HEK293 (cell line): ENCODE measurements at regions of chr15 and their contacts with region 1.

Region 1: DNA sequence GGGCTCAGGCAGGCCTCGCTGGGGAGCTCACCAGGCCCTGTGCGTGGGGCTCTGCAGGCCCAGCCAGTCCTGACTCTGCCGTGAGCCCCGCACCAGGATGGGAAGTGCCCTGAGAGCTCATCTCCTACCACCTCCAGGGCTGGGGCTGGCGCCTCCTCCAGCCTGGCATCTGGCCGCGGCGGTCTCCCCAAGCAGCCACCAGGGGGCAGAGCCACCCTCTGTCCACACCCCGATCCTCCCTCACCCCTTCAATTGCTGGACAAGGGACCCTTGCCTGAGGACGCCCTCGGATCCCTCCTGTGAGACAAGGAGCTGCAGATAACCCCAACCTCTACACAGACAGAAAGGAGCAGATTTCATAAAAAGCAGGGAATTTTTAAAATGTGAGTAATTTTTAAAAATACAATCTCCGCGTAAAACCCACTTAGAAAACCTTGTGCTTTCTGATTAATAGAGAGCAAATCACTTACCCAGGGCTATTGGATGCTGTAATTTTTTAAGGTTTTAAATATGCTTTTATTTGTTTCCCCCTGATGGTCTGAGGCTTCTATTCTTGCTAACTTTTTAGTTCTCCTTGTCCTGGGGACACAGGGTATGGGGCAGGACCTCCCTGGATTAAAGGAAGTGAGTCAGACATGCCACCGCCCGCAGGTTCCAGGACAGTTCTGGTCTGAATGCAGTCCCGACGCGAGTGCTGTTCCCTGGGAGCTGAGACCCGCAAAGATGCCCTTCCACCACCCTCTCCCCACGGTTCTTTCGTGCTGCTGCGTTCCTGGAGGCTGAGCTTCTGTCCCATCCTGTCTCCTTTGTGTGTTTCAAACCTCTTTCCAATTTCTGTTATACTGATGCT is 52.3 kb upstream of the CHRNA7 start:
- H3K4me3 ChIP-seq: no peak overlapping the region
- H3K27ac ChIP-seq: no peak overlapping the region
- H3K4me1 ChIP-seq: no peaks in the 10 kb centered on the region
- CTCF ChIP-seq: peak; percentile 76

Region 2: DNA sequence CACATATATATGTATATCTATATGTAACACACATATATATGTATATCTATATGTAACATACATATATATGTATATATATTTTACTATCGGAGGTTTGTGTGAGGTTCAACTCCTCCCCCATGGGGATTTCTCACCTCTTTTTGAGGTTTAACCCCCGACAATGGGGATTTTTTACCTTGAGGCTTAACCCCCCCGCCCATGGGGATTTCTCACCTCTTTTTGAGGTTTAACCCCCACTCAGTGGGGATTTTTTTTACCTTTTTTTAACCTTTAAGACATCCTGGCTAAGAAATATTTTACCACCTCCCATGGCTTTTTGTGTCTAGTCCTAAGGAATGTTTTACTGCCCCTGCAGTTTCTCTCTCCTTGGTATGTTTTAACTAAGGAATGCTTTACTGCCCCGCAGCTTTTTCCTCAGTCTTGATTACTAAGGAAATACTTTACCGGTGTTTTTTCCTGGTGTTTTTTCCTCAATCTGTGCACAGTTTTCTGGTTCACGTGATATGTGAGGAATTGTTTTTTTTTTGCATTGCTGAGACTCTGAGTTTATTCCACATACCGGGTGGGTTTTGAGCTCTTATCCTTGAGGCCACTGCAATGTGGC is 466.2 kb before region 1 on chr15:
- CTCF ChIA-PET with region 1: no interaction called
- POLR2A ChIA-PET with region 1: no interaction called
- H3K4me3 ChIP-seq: no peak overlapping the region
- H3K27ac ChIP-seq: no peak overlapping the region
- H3K4me1 ChIP-seq: no peaks in the 10 kb centered on the region
- CTCF ChIP-seq: no peak

Region 3: DNA sequence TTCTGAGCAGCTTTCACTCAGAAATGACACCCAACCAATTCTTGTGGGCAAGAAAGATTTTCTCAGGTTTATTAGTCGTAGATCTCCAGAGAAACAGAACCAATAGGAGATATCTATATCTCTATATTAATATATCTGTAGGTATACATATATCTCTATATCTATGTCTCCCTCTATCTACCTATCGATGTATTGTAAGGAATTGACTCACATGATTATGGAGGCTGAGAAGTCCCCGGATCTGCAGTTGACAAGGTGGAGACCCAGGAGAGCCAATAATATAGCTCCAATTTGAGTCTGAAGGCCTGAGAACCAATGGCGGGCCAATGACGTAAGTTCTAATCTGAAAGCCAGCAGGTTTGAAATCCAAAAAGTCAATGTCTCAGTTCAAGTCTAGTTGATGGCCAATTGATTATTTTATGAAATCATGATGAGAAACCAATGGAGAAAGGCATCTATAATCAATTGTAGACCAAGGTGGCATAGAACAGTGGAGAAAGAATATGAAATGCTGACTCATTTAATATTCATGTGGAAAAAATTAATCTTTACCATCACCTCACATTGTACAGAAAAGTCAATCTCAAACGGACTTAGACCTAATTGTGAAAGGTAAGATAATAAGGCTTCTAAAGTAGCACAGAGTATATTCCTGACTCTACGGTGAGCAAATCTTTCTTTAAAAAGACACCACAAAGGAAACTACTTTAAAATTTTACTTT is 13.3 kb before region 1 on chr15:
- CTCF ChIA-PET with region 1: interaction called, 12 read pairs
- POLR2A ChIA-PET with region 1: no interaction called
- H3K4me3 ChIP-seq: no peak overlapping the region
- H3K27ac ChIP-seq: no peak overlapping the region
- H3K4me1 ChIP-seq: no peaks in the 10 kb centered on the region
- CTCF ChIP-seq: no peak

Region 4: GRCh38 chr15:32003558-32003957 is 25.5 kb after region 1 on chr15:
- CTCF ChIA-PET with region 1: interaction called, 12 read pairs
- POLR2A ChIA-PET with region 1: no interaction called
- H3K4me3 ChIP-seq: no peak overlapping the region
- H3K27ac ChIP-seq: no peak overlapping the region
- H3K4me1 ChIP-seq: no peaks in the 10 kb centered on the region
- CTCF ChIP-seq: no peak

Region 5: GRCh38 chr15:32014953-32015352 is 36.9 kb after region 1 on chr15:
- CTCF ChIA-PET with region 1: interaction called, 10 read pairs
- POLR2A ChIA-PET with region 1: no interaction called
- H3K4me3 ChIP-seq: no peak overlapping the region
- H3K27ac ChIP-seq: no peak overlapping the region
- H3K4me1 ChIP-seq: no peaks in the 10 kb centered on the region
- CTCF ChIP-seq: no peak

Region 6: DNA sequence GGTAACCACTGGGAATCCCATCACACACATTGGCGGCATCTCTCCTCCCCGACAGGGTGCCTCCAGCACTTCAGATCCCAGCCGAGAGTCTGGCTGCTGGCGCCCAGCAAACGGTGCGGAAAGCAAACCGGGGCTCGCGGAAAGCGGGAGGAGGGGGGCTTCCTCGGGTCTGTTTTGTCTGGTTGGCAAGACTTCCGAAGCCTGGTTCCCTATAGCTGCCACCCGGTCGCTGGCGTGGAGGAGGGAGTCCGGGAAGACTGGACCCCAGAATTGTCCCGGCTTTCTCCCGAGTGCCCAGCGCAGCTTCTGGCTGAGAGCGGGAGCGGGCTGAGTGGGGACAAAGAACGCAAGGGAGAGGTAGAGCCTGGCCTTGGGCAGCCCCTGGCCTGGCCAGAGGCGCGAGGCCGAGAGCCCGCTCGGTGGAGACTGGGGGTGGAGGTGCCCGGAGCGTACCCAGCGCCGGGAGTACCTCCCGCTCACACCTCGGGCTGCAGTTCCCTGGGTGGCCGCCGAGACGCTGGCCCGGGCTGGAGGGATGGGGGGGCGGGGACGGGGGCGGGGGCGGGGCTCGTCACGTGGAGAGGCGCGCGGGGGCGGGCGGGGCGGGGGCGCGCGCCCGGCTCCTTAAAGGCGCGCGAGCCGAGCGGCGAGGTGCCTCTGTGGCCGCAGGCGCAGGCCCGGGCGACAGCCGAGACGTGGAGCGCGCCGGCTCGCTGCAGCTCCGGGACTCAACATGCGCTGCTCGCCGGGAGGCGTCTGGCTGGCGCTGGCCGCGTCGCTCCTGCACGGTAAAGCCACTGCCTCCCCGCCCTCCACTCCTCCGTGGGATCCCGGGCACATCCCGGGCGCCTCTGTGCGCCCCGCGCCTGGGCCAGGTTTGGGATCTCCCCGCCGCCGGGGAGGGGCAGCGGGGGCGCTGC is 52.1 kb after region 1 on chr15 and contains the start of gene CHRNA7:
- CTCF ChIA-PET with region 1: interaction called, 10 read pairs
- POLR2A ChIA-PET with region 1: interaction called, 3 read pairs
- H3K4me3 ChIP-seq: peak within 1 kb of the TSS; percentile 62
- H3K27ac ChIP-seq: peak within 1 kb of the TSS; percentile 64; the same call in 1 of the 2 replicates
- H3K4me1 ChIP-seq: no peaks in the 10 kb centered on the region; the same call in 1 of the 2 replicates
- CTCF ChIP-seq: no peak